Psoas muscle (tissue), 8 donors: ENCODE measurements at regions of chr11 and their contacts with region 1.

Region 1: DNA sequence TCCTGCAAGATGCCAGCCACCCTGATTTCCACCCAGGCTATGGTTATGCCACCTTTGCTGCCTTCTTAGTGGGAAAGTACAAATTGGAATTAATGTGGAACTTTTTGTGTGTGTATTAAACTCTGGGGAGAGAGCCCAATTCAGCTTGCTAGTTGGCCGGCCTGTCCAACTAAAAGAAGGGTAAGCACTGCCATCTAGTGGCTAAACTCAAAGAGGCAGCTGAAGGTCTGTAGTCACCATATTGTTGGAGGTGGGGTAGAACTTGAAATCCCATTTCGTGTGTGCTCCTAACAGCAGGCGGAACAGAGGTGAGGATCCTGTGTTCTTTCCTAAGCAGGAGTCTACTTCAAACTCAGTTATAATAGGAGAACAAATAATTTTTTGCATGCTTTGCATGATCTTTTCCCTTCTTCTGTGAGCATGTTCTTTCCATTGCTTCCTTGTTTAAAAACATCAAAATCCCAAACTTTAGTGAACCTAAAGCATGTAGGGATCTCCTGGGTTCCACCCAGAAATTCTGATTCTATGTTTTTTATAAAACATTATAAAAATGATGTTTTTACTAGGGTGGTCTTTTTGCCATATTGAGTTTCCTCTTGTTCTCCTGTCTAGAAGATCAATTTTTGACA is 138.8 kb upstream of the SORL1-AS1 start:
- DNase-seq: no peak
- ATAC-seq: peak; percentile 69 to 88 (median 76)
- H3K4me3 ChIP-seq: no peak overlapping the region
- H3K27ac ChIP-seq: no peak overlapping the region
- H3K4me1 ChIP-seq: no peaks in the 10 kb centered on the region
- H3K27me3 ChIP-seq: no peaks in the 10 kb centered on the region
- CTCF ChIP-seq: peak; percentile 87

Region 2: GRCh38 chr11:121226415-121227263 is 364.9 kb before region 1 on chr11:
- intact Hi-C with region 1: no loop called
- DNase-seq: no peak
- ATAC-seq: no peak
- H3K4me3 ChIP-seq: no peak overlapping the region
- H3K27ac ChIP-seq: no peak overlapping the region
- H3K4me1 ChIP-seq: no peaks in the 10 kb centered on the region
- H3K27me3 ChIP-seq: peaks cover 0 to 25% (median 1%) of the 10 kb centered on the region in 3 donors
- CTCF ChIP-seq: no peak

Region 3: DNA sequence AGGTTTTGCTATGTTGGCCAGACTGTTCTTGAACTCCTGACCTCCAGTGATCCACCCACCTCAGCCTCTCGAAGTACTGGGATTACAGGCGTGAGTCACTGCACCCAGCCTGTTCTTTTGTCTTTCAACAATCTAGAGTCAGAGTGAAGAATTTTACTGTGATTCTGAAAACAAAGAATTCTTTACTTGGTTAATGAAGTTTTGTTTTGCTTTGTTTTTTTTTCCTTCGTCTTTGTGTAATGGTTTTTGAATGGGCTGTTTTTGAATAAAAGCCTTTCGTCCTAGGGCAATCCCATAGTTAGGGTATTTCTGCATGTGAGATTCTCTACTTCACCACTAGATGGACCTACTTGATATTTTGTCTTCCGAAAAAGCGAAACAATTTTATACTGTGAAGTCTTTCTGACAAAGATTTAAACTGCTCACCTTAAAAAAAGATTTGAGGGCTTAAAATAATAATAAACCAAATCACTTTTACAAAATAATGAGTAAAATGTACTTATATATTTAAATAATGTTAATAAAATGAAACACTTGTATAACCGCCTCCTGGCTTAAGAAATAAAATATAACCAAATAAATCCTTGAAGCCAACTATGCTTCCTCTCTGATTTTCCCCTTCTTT is 342.4 kb before region 1 on chr11:
- intact Hi-C with region 1: loop called (anchors 2 to 5 kb)
- DNase-seq: no peak
- ATAC-seq: peak; percentile 39 to 75 (median 52)
- H3K4me3 ChIP-seq: no peak overlapping the region
- H3K27ac ChIP-seq: no peak overlapping the region
- H3K4me1 ChIP-seq: no peaks in the 10 kb centered on the region
- H3K27me3 ChIP-seq: no peaks in the 10 kb centered on the region
- CTCF ChIP-seq: peak; percentile 80

Region 4: DNA sequence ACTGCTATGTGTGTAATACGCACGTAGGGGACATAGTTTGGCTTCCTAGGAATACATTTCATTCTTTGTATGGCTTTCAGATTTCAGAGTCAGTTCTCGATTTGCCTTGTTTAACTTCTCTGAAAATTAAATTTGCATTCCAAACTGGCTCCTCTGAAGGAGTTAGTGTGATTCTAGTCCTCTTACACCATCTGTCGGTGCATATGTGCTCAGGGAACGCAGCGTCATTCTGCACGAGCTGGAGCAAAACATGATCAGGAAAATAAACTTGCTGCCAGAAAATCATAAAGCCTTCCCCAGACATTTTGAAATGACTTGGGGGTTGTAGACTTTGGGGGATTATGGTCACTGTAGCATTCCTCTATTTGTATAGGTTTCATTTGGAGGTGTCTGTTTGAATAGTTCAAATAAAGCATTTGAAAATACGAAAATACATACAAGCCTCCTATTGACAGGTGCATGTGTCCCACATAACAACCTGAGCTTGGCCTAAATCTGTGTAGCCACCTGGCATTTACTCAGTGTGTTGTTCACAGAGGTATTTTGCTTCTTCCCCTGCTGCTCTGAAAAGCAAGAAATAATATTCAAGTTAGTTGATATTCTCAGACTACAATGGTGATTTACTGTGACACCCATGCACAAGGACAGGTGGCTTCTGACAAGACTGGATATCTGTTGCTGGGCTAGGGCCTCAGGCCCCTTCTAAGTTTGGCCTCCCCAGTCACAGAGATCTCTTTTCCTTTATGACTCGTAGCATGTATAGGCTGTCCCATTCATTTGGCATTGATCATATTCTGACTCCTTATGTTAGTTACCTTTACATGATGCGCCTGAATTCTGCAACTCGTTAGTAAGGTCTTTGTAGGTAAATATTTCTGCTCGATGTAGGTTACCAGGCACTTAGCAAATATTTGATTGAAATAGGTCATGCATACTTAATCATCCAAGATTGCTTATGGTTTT is 57.1 kb before region 1 on chr11:
- intact Hi-C with region 1: loop called in 1 of 2 experiments (anchors 5 kb)
- DNase-seq: no peak
- ATAC-seq: peak; percentile 57 to 81 (median 67)
- H3K4me3 ChIP-seq: no peak overlapping the region
- H3K27ac ChIP-seq: no peak overlapping the region
- H3K4me1 ChIP-seq: no peaks in the 10 kb centered on the region
- H3K27me3 ChIP-seq: no peaks in the 10 kb centered on the region
- CTCF ChIP-seq: peak; percentile 40